PC-3 (cell line): ENCODE measurements at regions of chr3 and their contacts with region 1.

Region 1: GRCh38 chr3:105868742-105869530 is at the start of gene CBLB:
- DNase-seq: peak; percentile 97
- ATAC-seq: peak; percentile 83
- H3K4me3 ChIP-seq: peak within 1 kb of the TSS; percentile 96
- H3K27ac ChIP-seq: peak within 1 kb of the TSS; percentile 61
- H3K4me1 ChIP-seq: peaks cover 43% of the 10 kb centered on the region
- H3K27me3 ChIP-seq: no peaks in the 10 kb centered on the region
- CTCF ChIP-seq: no peak
- total RNA-seq, gene CBLB: 20.0 and 23.9 TPM in 2 replicates

Region 2: GRCh38 chr3:105686278-105686897 is 182.5 kb before region 1 on chr3:
- CTCF ChIA-PET with region 1: no interaction called
- POLR2A ChIA-PET with region 1: no interaction called
- intact Hi-C with region 1: loop called (anchors 5 kb)
- DNase-seq: peak; percentile 59
- ATAC-seq: no peak
- H3K4me3 ChIP-seq: no peak overlapping the region
- H3K27ac ChIP-seq: no peak overlapping the region
- H3K4me1 ChIP-seq: no peaks in the 10 kb centered on the region
- H3K27me3 ChIP-seq: no peaks in the 10 kb centered on the region
- CTCF ChIP-seq: peak; percentile 93

Region 3: GRCh38 chr3:105847452-105847851 is 21.5 kb before region 1 on chr3:
- CTCF ChIA-PET with region 1: no interaction called
- POLR2A ChIA-PET with region 1: no interaction called
- intact Hi-C with region 1: no loop called
- DNase-seq: no peak
- ATAC-seq: no peak
- H3K4me3 ChIP-seq: no peak overlapping the region
- H3K27ac ChIP-seq: no peak overlapping the region
- H3K4me1 ChIP-seq: no peaks in the 10 kb centered on the region
- H3K27me3 ChIP-seq: no peaks in the 10 kb centered on the region
- CTCF ChIP-seq: no peak

Region 4: GRCh38 chr3:105915524-105915923 is 46.6 kb after region 1 on chr3:
- CTCF ChIA-PET with region 1: no interaction called
- POLR2A ChIA-PET with region 1: no interaction called
- intact Hi-C with region 1: loop called (anchors 1 kb)
- DNase-seq: peak; percentile 82
- ATAC-seq: peak; percentile 95
- H3K4me3 ChIP-seq: no peak overlapping the region
- H3K27ac ChIP-seq: peak overlapping the region; percentile 92
- H3K4me1 ChIP-seq: peaks cover 4% of the 10 kb centered on the region
- H3K27me3 ChIP-seq: no peaks in the 10 kb centered on the region
- CTCF ChIP-seq: no peak

Region 5: GRCh38 chr3:106013971-106014370 is 145.0 kb after region 1 on chr3:
- CTCF ChIA-PET with region 1: no interaction called
- POLR2A ChIA-PET with region 1: no interaction called
- intact Hi-C with region 1: loop called (anchors 2 kb)
- DNase-seq: peak; percentile 98
- ATAC-seq: peak; percentile 97
- H3K4me3 ChIP-seq: no peak overlapping the region
- H3K27ac ChIP-seq: peak overlapping the region; percentile 95
- H3K4me1 ChIP-seq: peaks cover 22% of the 10 kb centered on the region
- H3K27me3 ChIP-seq: no peaks in the 10 kb centered on the region
- CTCF ChIP-seq: no peak

Region 6: GRCh38 chr3:106206146-106206545 is 337.2 kb after region 1 on chr3:
- CTCF ChIA-PET with region 1: no interaction called
- POLR2A ChIA-PET with region 1: no interaction called
- intact Hi-C with region 1: loop called (anchors 2 kb)
- DNase-seq: peak; percentile 14
- ATAC-seq: no peak
- H3K4me3 ChIP-seq: no peak overlapping the region
- H3K27ac ChIP-seq: no peak overlapping the region
- H3K4me1 ChIP-seq: no peaks in the 10 kb centered on the region; the same call in 1 of the 2 replicates
- H3K27me3 ChIP-seq: no peaks in the 10 kb centered on the region
- CTCF ChIP-seq: no peak

Region 7: DNA sequence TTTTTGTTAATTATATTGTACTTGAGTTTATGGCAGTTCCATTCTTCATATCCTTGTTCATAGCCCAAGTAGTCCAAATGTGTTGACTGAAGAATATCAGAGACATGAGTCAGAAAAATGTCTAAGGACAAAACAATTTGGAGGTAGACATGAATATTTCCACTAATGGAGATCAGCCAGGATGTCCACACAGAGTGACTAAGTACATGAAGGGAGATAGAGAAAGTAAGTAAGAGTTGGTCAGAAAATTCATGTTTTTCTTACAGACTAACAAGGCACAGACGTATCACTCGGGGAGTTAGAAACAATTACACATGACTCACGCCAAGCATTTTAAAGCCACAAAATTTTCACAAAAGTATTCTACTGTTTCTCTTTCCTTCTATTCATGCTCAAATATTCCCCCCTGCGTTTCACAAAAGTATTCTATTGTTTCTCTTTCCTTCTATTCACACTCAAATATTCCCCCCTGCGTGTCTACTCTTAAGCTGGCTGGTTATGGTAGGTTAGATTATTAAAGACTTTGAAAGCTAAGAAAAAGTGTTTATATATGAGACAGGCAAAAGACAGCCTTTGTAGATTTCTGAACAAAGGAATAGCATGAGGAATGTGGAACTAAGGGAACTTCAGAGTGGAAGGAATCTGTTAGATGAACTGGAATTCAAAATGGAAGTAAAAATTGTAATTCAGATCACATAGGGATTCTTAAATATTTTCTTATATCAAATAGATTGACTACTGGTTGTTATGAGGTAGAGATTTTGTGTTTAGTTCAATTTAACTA is 859.6 kb after region 1 on chr3:
- CTCF ChIA-PET with region 1: no interaction called
- POLR2A ChIA-PET with region 1: no interaction called
- intact Hi-C with region 1: loop called (anchors 5 kb)
- DNase-seq: peak; percentile 98
- ATAC-seq: peak; percentile 98
- H3K4me3 ChIP-seq: peak overlapping the region; percentile 55
- H3K27ac ChIP-seq: peak overlapping the region; percentile 75
- H3K4me1 ChIP-seq: peaks cover 27% of the 10 kb centered on the region
- H3K27me3 ChIP-seq: no peaks in the 10 kb centered on the region
- CTCF ChIP-seq: no peak